Upper lobe of right lung (tissue), 1 donor: ENCODE measurements at regions of chr1 and their contacts with region 1.

Region 1: GRCh38 chr1:209260136-209260535 is 323.4 kb upstream of the CAMK1G start:
- DNase-seq: no peak
- ATAC-seq: no peak
- H3K4me3 ChIP-seq: no peak overlapping the region
- H3K27ac ChIP-seq: no peak overlapping the region
- H3K4me1 ChIP-seq: no peaks in the 10 kb centered on the region
- H3K27me3 ChIP-seq: no peaks in the 10 kb centered on the region
- CTCF ChIP-seq: no peak

Region 2: GRCh38 chr1:209238356-209238755 is 21.8 kb before region 1 on chr1:
- intact Hi-C with region 1: loop called (anchors 2 kb)
- DNase-seq: no peak
- ATAC-seq: no peak
- H3K4me3 ChIP-seq: no peak overlapping the region
- H3K27ac ChIP-seq: no peak overlapping the region
- H3K4me1 ChIP-seq: no peaks in the 10 kb centered on the region
- H3K27me3 ChIP-seq: peaks cover 4% of the 10 kb centered on the region
- CTCF ChIP-seq: no peak